ENCODE measurements at regions of chr17 and their contacts with region 1.

Region 1: DNA sequence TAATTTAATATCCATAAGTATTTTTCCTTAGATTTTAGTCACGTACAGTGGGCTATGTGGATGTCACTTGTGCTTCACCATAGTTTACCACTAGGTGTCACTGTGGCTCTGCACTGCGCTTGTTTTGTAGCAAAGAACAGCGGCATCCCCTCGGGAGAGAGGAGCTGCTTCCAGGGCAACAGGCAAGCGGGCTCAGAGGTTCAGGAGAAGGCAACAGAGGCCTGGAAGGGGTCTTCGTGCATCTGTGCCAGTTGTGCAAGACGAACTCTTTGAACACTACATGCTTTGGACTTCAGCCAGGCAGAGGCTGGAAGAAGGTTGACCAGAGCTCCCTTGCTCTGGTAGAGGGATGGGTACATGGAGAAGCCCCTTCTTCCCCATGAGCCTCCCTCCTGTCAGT is 20.6 kb downstream of the CYB561 start:
- DNase-seq: peak; percentile 90
- H3K4me3 ChIP-seq: no peak overlapping the region; a peak in 1 of 4 replicates
- H3K27ac ChIP-seq: peak overlapping the region in 1 of 2 experiments; percentile 77; a peak in 2 of 4 replicates
- H3K4me1 ChIP-seq: peaks cover 0 to 48% of the 10 kb centered on the region in 2 experiments; a peak in 2 of 4 replicates
- H3K27me3 ChIP-seq: no peaks in the 10 kb centered on the region
- CTCF ChIP-seq: peak; percentile 100
- EP300 ChIP-seq: peak in 1 of 2 experiments; percentile 50; a peak in 1 of 4 replicates
- RAD21 ChIP-seq: peak; percentile 100

Region 2: GRCh38 chr17:63413128-63413527 is 12.4 kb before region 1 on chr17:
- CTCF ChIA-PET with region 1: interaction called, 68 read pairs
- POLR2A ChIA-PET with region 1: no interaction called
- DNase-seq: no peak
- H3K4me3 ChIP-seq: no peak overlapping the region
- H3K27ac ChIP-seq: no peak overlapping the region
- H3K4me1 ChIP-seq: peaks cover 0 to 7% of the 10 kb centered on the region in 2 experiments; a peak in 2 of 4 replicates
- H3K27me3 ChIP-seq: no peaks in the 10 kb centered on the region
- CTCF ChIP-seq: no peak
- EP300 ChIP-seq: no peak
- RAD21 ChIP-seq: no peak

Region 3: DNA sequence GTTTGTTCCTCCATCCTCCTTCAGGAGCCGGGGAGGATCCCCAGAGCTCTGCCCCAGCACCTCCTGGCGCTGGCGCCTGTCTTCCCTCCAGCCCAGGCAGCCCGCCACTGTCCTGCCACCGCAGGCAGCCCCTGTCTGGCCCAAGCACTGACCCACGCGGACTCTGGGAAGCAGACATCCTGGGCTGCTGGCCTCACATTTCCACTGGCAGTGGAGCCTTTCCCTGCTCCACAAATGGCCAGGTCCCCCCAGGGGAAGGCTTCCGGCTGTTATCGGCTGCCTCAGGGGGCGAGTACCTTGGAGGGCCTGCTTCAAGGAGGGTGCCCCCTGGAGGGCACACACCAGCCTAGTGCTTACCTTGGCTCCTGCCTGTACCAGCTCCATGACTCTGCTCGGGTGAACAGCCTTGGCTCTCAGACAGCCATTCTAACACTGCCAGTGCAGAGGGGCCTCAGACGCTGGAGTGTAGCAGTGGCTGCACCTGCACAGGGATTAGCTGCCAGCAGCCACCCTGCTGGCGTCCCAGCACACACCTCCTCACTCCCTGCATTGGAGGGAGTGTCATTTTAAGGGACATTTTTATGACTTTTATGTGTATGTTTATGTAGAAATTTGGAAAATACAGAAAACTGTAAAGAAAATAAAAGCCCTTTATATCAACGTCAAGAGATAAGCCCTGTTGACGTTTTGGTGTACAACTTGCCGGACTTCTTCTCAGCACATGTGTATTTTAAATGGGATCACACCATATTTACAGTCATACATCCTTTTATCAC is 72.4 kb after region 1 on chr17:
- CTCF ChIA-PET with region 1: interaction called, 30 read pairs
- POLR2A ChIA-PET with region 1: interaction called, 5 read pairs
- DNase-seq: peak; percentile 78
- H3K4me3 ChIP-seq: no peak overlapping the region
- H3K27ac ChIP-seq: peak overlapping the region in 1 of 2 experiments; percentile 43; a peak in 2 of 4 replicates
- H3K4me1 ChIP-seq: peaks cover 4 to 27% of the 10 kb centered on the region in 2 experiments; a peak in 1 of 4 replicates
- H3K27me3 ChIP-seq: peaks cover under 1% of the 10 kb centered on the region; the same call in 1 of the 2 replicates
- CTCF ChIP-seq: peak; percentile 37
- EP300 ChIP-seq: no peak
- RAD21 ChIP-seq: peak; percentile 35

Region 4: GRCh38 chr17:63549946-63550807 is 124.7 kb after region 1 on chr17 and contains the start of gene DCAF7:
- CTCF ChIA-PET with region 1: interaction called, 44 read pairs
- POLR2A ChIA-PET with region 1: interaction called, 4 read pairs
- DNase-seq: peak; percentile 100
- H3K4me3 ChIP-seq: peak within 1 kb of the TSS; percentile 85 to 93
- H3K27ac ChIP-seq: peak within 1 kb of the TSS; percentile 90 to 92
- H3K4me1 ChIP-seq: peaks cover 9 to 30% of the 10 kb centered on the region in 2 experiments; a peak in 3 of 4 replicates
- H3K27me3 ChIP-seq: no peaks in the 10 kb centered on the region
- CTCF ChIP-seq: no peak
- EP300 ChIP-seq: no peak; a peak in 1 of 4 replicates
- RAD21 ChIP-seq: peak; percentile 6; the same call in 1 of the 2 replicates
- polyA plus RNA-seq, gene DCAF7: 54.6 and 63.5 TPM in 2 replicates

Region 5: GRCh38 chr17:63592797-63593472 is 167.5 kb after region 1 on chr17:
- CTCF ChIA-PET with region 1: interaction called, 12 read pairs
- POLR2A ChIA-PET with region 1: interaction called, 3 read pairs
- DNase-seq: no peak
- H3K4me3 ChIP-seq: no peak overlapping the region
- H3K27ac ChIP-seq: no peak overlapping the region
- H3K4me1 ChIP-seq: peaks cover 0 to 2% of the 10 kb centered on the region in 2 experiments; a peak in 1 of 4 replicates
- H3K27me3 ChIP-seq: no peaks in the 10 kb centered on the region
- CTCF ChIP-seq: no peak
- EP300 ChIP-seq: no peak
- RAD21 ChIP-seq: no peak

Region 6: GRCh38 chr17:63675607-63676413 is 250.3 kb after region 1 on chr17:
- CTCF ChIA-PET with region 1: interaction called, 18 read pairs
- POLR2A ChIA-PET with region 1: no interaction called
- DNase-seq: peak; percentile 85
- H3K4me3 ChIP-seq: peak overlapping the region in 1 of 2 experiments; percentile 45; a peak in 3 of 4 replicates
- H3K27ac ChIP-seq: peak overlapping the region; percentile 65 to 97
- H3K4me1 ChIP-seq: peaks cover 26 to 38% of the 10 kb centered on the region in 2 experiments
- H3K27me3 ChIP-seq: no peaks in the 10 kb centered on the region
- CTCF ChIP-seq: no peak
- EP300 ChIP-seq: peak; percentile 52 to 86; a peak in 3 of 4 replicates
- RAD21 ChIP-seq: peak; percentile 42